SK-N-SH (cell line): ENCODE measurements at regions of chrX and their contacts with region 1.

Region 1: DNA sequence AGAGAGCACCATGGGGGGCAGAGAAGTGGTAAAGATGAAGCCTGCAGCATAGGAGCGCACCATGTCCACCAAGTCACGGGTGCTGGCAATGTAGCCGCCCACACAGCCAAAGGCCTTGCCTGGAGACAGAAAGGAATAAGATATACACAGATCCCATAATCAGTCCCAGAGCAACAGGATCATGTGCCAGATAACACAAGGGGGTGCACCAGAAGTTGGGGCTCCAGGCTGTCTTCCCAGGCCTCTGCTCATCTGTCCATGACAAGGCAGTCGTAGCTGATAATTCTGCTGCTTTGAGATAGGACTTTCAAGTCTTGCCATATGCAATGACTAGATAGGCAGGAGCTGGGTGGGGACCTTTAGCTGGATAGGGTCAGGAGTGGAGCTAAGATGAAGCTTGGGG is 14.7 kb downstream of the APEX2 start:
- DNase-seq: no peak
- H3K4me3 ChIP-seq: no peak overlapping the region
- H3K27ac ChIP-seq: no peak overlapping the region
- H3K4me1 ChIP-seq: no peaks in the 10 kb centered on the region
- H3K27me3 ChIP-seq: no peaks in the 10 kb centered on the region; the same call in 1 of the 2 replicates
- CTCF ChIP-seq: no peak
- EP300 ChIP-seq: no peak
- RAD21 ChIP-seq: no peak

Region 2: DNA sequence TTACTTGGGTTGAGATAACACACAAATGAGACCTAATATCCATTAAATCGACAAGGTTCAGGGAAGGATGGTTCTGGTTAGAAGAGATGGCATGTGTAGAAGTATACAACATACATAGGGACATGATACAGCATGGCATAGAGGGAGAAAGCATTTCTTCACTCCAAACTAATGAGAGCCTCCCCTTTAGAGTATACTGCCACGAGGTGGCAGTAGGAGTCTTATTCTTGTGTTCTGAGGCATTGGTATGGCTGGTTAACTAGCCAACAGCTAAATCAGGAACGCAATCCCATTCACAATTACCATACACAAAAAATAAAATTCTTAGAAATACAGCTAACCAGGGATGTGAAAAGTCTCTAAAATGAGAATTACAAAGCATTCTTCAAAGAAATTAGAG is 123.3 kb before region 1 on chrX:
- CTCF ChIA-PET with region 1: interaction called, 10 read pairs
- POLR2A ChIA-PET with region 1: no interaction called
- DNase-seq: peak; percentile 29
- H3K4me3 ChIP-seq: no peak overlapping the region
- H3K27ac ChIP-seq: no peak overlapping the region
- H3K4me1 ChIP-seq: no peaks in the 10 kb centered on the region
- H3K27me3 ChIP-seq: peaks cover 4% of the 10 kb centered on the region; the same call in 1 of the 2 replicates
- CTCF ChIP-seq: peak; percentile 58
- EP300 ChIP-seq: no peak
- RAD21 ChIP-seq: peak; percentile 75

Region 3: DNA sequence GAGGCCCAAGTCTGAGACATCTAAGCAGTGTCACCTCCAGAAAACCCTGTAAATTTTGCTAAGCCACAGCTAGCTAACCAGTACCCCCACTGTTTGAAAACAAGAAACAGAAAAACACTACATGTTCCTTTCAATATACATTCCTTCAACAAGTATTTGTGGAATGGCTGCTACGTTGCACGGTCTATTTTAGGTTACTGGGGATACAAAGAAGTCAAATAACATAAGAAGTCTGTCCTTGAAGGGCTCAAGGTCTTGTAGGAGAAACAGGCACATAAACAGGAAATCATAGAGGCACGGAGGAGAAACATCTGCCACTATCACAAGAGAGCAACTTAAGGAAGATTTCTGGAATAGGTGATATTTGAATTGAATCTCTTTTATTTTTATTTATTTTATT is 30.8 kb after region 1 on chrX:
- CTCF ChIA-PET with region 1: no interaction called
- POLR2A ChIA-PET with region 1: no interaction called
- DNase-seq: no peak
- H3K4me3 ChIP-seq: no peak overlapping the region
- H3K27ac ChIP-seq: no peak overlapping the region
- H3K4me1 ChIP-seq: no peaks in the 10 kb centered on the region
- H3K27me3 ChIP-seq: 0 out of 2 replicates have a peak, but pooled peaks cover 6% of the 10 kb centered on the region
- CTCF ChIP-seq: no peak
- EP300 ChIP-seq: no peak
- RAD21 ChIP-seq: no peak